OCI-LY7 (cell line): ENCODE measurements at regions of chr6 and their contacts with region 1.

Region 1: GRCh38 chr6:90940812-90941481 is 354.1 kb upstream of the MAP3K7 start:
- DNase-seq: peak; percentile 83
- H3K4me3 ChIP-seq: peak overlapping the region; percentile 46
- H3K27ac ChIP-seq: no peak overlapping the region
- H3K4me1 ChIP-seq: no peaks in the 10 kb centered on the region
- CTCF ChIP-seq: peak; percentile 90

Region 2: GRCh38 chr6:90715093-90715655 is 225.8 kb before region 1 on chr6:
- CTCF ChIA-PET with region 1: no interaction called
- POLR2A ChIA-PET with region 1: no interaction called
- intact Hi-C with region 1: no loop called
- DNase-seq: no peak
- H3K4me3 ChIP-seq: no peak overlapping the region
- H3K27ac ChIP-seq: no peak overlapping the region
- H3K4me1 ChIP-seq: no peaks in the 10 kb centered on the region
- CTCF ChIP-seq: no peak

Region 3: DNA sequence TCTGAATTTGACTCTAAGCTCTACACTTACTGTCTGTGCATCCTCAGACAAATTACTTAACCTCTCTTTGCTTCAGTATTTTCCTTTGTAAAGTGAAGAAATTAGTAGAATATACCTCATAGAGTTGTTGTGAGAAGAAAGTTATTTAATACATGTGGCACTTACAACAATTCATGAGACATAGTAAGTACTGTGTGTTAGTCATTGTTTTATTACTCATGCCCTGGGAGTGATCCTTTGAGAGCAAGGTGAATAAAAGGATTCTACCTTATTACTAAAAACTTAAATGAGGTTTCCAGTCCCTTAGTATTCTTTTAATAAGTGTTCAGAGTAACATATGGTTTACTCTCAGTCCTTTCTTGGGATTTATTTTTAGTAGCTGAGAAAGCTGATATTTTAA is 120.5 kb before region 1 on chr6:
- CTCF ChIA-PET with region 1: no interaction called
- POLR2A ChIA-PET with region 1: no interaction called
- intact Hi-C with region 1: no loop called
- DNase-seq: no peak
- H3K4me3 ChIP-seq: no peak overlapping the region
- H3K27ac ChIP-seq: no peak overlapping the region
- H3K4me1 ChIP-seq: no peaks in the 10 kb centered on the region
- CTCF ChIP-seq: no peak

Region 4: GRCh38 chr6:91081452-91082067 is 140.6 kb after region 1 on chr6:
- CTCF ChIA-PET with region 1: no interaction called
- POLR2A ChIA-PET with region 1: no interaction called
- intact Hi-C with region 1: loop called (anchors 5 kb)
- DNase-seq: peak; percentile 50
- H3K4me3 ChIP-seq: no peak overlapping the region
- H3K27ac ChIP-seq: no peak overlapping the region
- H3K4me1 ChIP-seq: no peaks in the 10 kb centered on the region
- CTCF ChIP-seq: peak; percentile 88

Region 5: GRCh38 chr6:91288741-91289140 is 347.8 kb after region 1 on chr6:
- CTCF ChIA-PET with region 1: no interaction called
- POLR2A ChIA-PET with region 1: no interaction called
- intact Hi-C with region 1: loop called (anchors 10 kb)
- DNase-seq: no peak
- H3K4me3 ChIP-seq: no peak overlapping the region
- H3K27ac ChIP-seq: no peak overlapping the region
- H3K4me1 ChIP-seq: no peaks in the 10 kb centered on the region
- CTCF ChIP-seq: no peak